ENCODE measurements at regions of chr17 and their contacts with region 1.

Region 1: GRCh38 chr17:49315551-49316257 is 46.3 kb downstream of the ZNF652 start:
- DNase-seq: peak; percentile 66 to 86 (median 71)
- H3K4me3 ChIP-seq: peak overlapping the region; percentile 9
- H3K4me3 Mint-ChIP-seq: peak overlapping the region; percentile 22 to 92 (median 84)
- H3K27ac ChIP-seq: no peak overlapping the region
- H3K27ac Mint-ChIP-seq: peak overlapping the region; percentile 38 to 92 (median 84)
- H3K4me1 ChIP-seq: peaks cover 10% of the 10 kb centered on the region
- H3K4me1 Mint-ChIP-seq: peaks cover 30 to 43% (median 37%) of the 10 kb centered on the region in 3 donors
- H3K27me3 ChIP-seq: no peaks in the 10 kb centered on the region
- H3K27me3 Mint-ChIP-seq: no peaks in the 10 kb centered on the region

Region 2: DNA sequence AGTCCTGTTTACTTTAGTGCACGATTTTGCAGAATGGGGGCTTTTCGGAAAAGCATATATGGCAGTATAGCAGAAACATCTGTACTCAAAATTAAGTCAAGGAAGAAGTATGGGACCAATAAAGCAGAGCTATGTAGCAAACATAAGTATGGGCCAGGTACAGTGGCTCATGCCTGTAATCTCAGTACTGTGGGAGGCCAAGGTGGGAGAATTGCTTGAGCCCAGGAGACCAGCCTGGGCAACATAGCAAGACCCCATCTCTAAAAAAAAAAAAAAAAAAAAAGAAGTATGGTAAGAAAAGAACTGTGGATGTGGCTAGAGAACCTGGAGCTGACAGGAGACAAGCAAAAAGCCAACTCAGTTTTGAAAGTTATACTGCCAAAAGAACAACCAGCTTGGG is 10.3 kb after region 1 on chr17:
- CTCF ChIA-PET with region 1: interaction called, 16 read pairs
- POLR2A ChIA-PET with region 1: no interaction called
- DNase-seq: no peak
- H3K4me3 ChIP-seq: no peak overlapping the region
- H3K4me3 Mint-ChIP-seq: no peak overlapping the region
- H3K27ac ChIP-seq: no peak overlapping the region
- H3K27ac Mint-ChIP-seq: peak overlapping the region in 2 of 8 donors; percentile 48 to 61
- H3K4me1 ChIP-seq: peaks cover 9% of the 10 kb centered on the region
- H3K4me1 Mint-ChIP-seq: peaks cover 56 to 81% (median 60%) of the 10 kb centered on the region in 3 donors
- H3K27me3 ChIP-seq: no peaks in the 10 kb centered on the region
- H3K27me3 Mint-ChIP-seq: no peaks in the 10 kb centered on the region

Region 3: GRCh38 chr17:49343273-49343672 is 27.6 kb after region 1 on chr17:
- CTCF ChIA-PET with region 1: interaction called, 16 read pairs
- POLR2A ChIA-PET with region 1: no interaction called
- DNase-seq: peak in 1 of 5 donors; percentile 22
- H3K4me3 ChIP-seq: peak overlapping the region; percentile 50
- H3K4me3 Mint-ChIP-seq: peak overlapping the region; percentile 54 to 91 (median 73)
- H3K27ac ChIP-seq: no peak overlapping the region
- H3K27ac Mint-ChIP-seq: peak overlapping the region; percentile 67 to 99 (median 78)
- H3K4me1 ChIP-seq: peaks cover 70% of the 10 kb centered on the region
- H3K4me1 Mint-ChIP-seq: peaks cover 60 to 87% (median 84%) of the 10 kb centered on the region in 3 donors
- H3K27me3 ChIP-seq: no peaks in the 10 kb centered on the region
- H3K27me3 Mint-ChIP-seq: no peaks in the 10 kb centered on the region

Region 4: DNA sequence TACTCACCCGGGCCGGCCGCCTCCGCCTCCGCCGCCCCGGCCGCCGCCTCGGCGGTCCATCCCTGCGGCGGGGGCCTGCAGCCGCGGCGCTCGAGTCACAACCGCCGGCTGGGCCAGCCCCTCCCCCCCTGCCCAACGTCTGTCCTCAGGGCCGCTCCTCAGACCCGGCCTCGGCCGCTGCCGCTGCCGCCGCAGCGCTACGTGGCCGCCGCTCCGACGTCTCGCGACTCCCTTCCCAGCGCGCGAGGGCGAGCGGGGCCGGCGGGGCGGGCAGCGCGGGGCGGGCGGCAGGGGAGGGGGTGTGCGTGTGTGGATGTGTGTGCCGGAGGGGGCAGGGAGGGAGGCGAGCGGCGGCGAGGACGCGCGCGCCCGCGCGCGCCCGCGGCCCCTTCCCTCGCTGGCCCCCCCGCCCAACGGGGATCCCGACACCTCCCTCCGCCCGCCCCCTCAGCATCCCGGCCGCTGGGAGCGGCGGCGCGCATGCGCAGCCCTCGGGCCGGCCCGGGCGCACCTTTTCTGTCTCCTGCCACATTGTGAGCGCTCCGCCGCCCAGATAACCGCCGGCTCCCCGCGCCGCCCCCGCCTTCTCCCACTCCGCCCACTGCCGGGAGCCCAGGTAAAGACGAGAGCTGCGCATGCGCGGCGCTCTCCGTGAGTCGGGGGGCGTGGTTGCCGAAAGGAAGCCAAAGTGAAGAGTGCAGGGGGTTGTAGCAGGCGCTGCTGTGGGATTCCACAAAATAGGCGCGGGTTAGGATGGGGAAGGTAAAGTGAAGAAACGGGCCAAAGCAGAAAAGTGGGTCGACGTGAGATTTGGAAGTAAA is 46.4 kb after region 1 on chr17 and contains the start of gene ZNF652:
- CTCF ChIA-PET with region 1: interaction called, 90 read pairs
- POLR2A ChIA-PET with region 1: interaction called, 5 read pairs
- DNase-seq: peak; percentile 88 to 98 (median 96)
- H3K4me3 ChIP-seq: peak within 1 kb of the TSS; percentile 70
- H3K4me3 Mint-ChIP-seq: peak within 1 kb of the TSS; percentile 92 to 99 (median 95)
- H3K27ac ChIP-seq: peak within 1 kb of the TSS; percentile 56
- H3K27ac Mint-ChIP-seq: peak within 1 kb of the TSS; percentile 94 to 100 (median 98)
- H3K4me1 ChIP-seq: peaks cover 55% of the 10 kb centered on the region
- H3K4me1 Mint-ChIP-seq: peaks cover 61 to 69% (median 65%) of the 10 kb centered on the region in 3 donors
- H3K27me3 ChIP-seq: no peaks in the 10 kb centered on the region
- H3K27me3 Mint-ChIP-seq: peaks cover 0 to 2% of the 10 kb centered on the region in 2 donors
- total RNA-seq, gene ZNF652: 11.5 to 11.9 TPM

Region 5: DNA sequence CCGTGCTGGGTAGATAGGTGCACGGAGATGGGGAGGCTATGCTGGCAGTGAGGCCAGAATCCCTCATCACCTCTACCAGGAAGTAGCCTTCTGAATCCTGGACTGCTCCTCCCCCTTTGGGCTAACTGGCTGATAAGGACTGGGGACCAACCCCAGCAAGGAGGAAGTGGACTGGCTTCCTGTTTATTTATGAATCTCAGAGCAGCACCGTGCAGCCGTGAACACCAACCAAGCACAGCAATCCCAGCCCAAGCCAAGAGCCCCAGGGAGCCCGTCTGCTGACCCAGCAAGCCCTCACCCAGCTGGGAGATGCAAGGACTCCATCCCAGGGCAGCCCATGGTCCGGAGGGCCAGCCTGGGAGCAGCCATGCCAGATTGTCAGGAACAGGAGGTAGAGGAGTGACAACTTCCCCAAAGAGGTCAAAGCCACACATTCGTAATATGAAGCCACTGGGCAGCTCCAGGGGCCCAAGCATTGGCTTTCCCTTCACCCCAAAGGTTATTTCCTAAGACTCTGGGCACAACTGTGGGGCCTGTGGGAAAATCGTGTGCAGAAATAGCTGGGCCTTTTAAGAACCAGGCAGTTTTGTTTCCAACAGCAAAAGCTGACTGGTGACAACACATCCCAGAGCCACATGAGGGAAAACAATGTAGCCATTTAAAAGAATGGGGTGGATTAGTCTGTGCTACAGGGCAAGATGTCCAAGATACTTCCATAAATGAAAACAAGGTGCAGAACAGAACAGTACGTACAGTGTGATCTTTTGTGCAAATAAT is 75.0 kb after region 1 on chr17:
- CTCF ChIA-PET with region 1: interaction called, 32 read pairs
- POLR2A ChIA-PET with region 1: interaction called, 3 read pairs
- DNase-seq: no peak
- H3K4me3 ChIP-seq: peak overlapping the region; percentile 28
- H3K4me3 Mint-ChIP-seq: peak overlapping the region in 6 of 7 donors; percentile 77 to 91 (median 80)
- H3K27ac ChIP-seq: no peak overlapping the region
- H3K27ac Mint-ChIP-seq: peak overlapping the region; percentile 81 to 99 (median 96)
- H3K4me1 ChIP-seq: peaks cover 53% of the 10 kb centered on the region
- H3K4me1 Mint-ChIP-seq: peaks cover 61 to 73% (median 73%) of the 10 kb centered on the region in 3 donors
- H3K27me3 ChIP-seq: no peaks in the 10 kb centered on the region
- H3K27me3 Mint-ChIP-seq: no peaks in the 10 kb centered on the region

Region 6: DNA sequence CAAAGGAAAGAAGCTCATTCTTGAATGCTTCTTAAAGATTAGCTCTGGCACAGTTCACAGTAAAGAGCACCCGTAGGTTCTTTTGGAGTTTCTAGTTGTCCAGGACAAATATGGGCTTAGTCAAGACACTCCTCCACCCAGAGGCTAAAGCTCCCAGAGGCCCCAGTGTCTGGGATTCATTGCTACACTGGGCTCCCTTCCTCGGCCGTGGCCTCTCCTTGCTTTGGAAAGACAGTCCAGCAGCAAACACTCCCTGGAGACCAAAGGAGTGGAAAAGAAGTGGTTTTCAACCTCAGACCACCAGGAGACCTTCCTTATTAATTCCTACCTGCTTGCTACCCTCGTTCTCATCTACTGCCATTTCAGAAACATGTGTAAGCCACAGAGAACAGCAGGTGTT is 81.9 kb after region 1 on chr17:
- CTCF ChIA-PET with region 1: interaction called, 32 read pairs
- POLR2A ChIA-PET with region 1: interaction called, 3 read pairs
- DNase-seq: no peak
- H3K4me3 ChIP-seq: no peak overlapping the region
- H3K4me3 Mint-ChIP-seq: no peak overlapping the region
- H3K27ac ChIP-seq: no peak overlapping the region
- H3K27ac Mint-ChIP-seq: no peak overlapping the region
- H3K4me1 ChIP-seq: peaks cover 5% of the 10 kb centered on the region
- H3K4me1 Mint-ChIP-seq: peaks cover 19 to 22% (median 21%) of the 10 kb centered on the region in 3 donors
- H3K27me3 ChIP-seq: no peaks in the 10 kb centered on the region
- H3K27me3 Mint-ChIP-seq: peaks cover 0 to 2% of the 10 kb centered on the region in 2 donors

Measured in CD8-positive, alpha-beta memory T cell (primary cell).